ENCODE measurements at regions of chr6 and their contacts with region 1.

Region 1: DNA sequence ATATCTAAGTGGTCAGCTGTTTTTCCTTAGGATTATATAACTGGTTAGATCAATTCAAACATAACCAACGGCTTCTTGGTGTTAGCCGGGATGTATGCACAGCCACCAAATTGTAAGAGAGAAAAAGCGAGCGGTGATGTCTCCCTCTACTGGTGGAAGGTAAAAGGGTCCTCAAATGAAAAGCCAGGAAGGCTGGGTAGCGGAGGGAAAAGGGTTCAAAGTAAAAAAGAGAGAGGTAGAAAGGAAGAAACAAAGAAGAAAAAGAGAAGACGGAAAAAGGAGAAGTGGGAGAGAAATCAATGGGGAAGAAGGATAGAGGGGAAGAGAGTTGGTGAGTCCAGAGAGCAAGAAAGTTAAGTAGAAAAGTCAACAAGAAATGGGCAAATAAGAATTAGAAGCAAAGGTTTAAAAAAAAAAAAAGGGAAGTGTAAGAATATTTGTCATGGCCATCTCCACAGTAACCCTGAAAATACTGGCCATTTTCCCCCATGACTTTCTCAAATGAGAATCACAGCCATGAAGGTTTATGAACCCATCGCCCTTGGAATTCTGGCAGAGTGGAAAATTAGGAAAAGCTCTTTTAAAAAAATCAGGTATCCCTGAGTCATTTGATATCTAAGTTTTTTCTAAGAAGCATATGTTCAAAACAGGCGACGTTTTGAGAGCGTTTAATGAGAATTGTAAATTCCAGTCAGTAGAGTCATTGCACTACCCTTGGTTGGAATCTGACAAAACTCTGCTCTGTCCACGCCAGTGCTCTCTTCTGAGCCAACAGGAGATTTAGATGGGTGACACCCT is 155.6 kb upstream of the SNX9 start:
- DNase-seq: peak in 1 of 2 experiments; percentile 59
- H3K4me3 ChIP-seq: no peak overlapping the region
- H3K4me3 Mint-ChIP-seq: no peak overlapping the region
- H3K27ac Mint-ChIP-seq: peak overlapping the region; percentile 2
- H3K4me1 ChIP-seq: no peaks in the 10 kb centered on the region
- H3K4me1 Mint-ChIP-seq: peaks cover 7% of the 10 kb centered on the region
- H3K27me3 ChIP-seq: no peaks in the 10 kb centered on the region
- H3K27me3 Mint-ChIP-seq: no peaks in the 10 kb centered on the region
- CTCF ChIP-seq: peak; percentile 86 to 89

Region 2: GRCh38 chr6:157339432-157339831 is 328.0 kb before region 1 on chr6:
- CTCF ChIA-PET with region 1: no interaction called
- POLR2A ChIA-PET with region 1: no interaction called
- intact Hi-C with region 1: loop called (anchors 1 kb)
- DNase-seq: no peak
- H3K4me3 ChIP-seq: no peak overlapping the region
- H3K4me3 Mint-ChIP-seq: no peak overlapping the region
- H3K27ac Mint-ChIP-seq: no peak overlapping the region
- H3K4me1 ChIP-seq: 0 out of 2 replicates have a peak, but pooled peaks cover 4% of the 10 kb centered on the region
- H3K4me1 Mint-ChIP-seq: no peaks in the 10 kb centered on the region
- H3K27me3 ChIP-seq: no peaks in the 10 kb centered on the region
- H3K27me3 Mint-ChIP-seq: no peaks in the 10 kb centered on the region
- CTCF ChIP-seq: peak in 1 of 2 experiments; percentile 30